PC-9 (cell line): ENCODE measurements at regions of chrX and their contacts with region 1.

Region 1: GRCh38 chrX:69153060-69153730 is 12.1 kb downstream of the PJA1 start:
- DNase-seq: peak; percentile 53 to 55
- H3K4me3 ChIP-seq: no peak overlapping the region
- H3K27ac ChIP-seq: peak overlapping the region; percentile 90
- H3K4me1 ChIP-seq: peaks cover 49% of the 10 kb centered on the region
- H3K27me3 ChIP-seq: no peaks in the 10 kb centered on the region
- CTCF ChIP-seq: no peak

Region 2: DNA sequence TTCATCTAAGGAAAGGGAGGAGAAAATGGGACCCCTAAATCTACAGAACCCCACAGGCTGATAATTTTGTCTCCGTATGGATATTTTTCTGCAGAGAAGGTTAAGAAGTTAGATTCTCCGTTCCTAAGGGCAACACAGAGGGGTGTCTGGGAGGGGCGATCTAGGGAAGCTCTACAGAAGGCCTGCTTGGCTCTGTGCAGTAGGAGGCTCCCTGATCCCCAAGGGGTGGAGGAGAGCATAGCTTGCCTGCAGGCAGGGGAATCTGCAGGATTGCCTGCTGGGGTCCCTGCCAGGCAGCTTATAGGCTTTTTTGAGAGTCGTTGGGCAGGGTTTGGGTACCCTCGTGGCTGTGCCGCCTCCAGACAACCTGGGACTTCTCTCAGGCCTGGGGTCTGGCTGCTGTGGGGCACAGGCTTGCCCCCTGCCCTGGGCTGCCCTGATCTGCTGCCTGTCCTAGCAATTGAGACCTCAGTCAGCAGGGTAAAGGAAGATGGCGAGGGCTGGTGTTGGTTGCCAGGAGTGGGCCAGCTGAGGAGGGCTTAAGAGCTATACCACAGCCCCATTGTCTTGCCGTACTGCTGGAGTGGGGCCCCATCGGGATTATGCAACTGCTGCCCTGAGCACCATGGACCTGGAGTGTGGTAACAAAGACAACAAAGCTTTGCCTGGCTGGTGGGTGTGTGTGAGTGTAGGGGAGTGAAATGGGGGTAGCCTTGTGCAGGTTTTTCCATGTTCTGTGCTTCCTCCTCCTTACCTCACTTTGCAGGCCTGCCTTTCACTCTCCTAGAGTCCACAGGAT is 250.3 kb before region 1 on chrX:
- CTCF ChIA-PET with region 1: no interaction called
- POLR2A ChIA-PET with region 1: interaction called, 17 read pairs
- intact Hi-C with region 1: no loop called
- DNase-seq: no peak
- H3K4me3 ChIP-seq: no peak overlapping the region
- H3K27ac ChIP-seq: no peak overlapping the region
- H3K4me1 ChIP-seq: no peaks in the 10 kb centered on the region
- H3K27me3 ChIP-seq: no peaks in the 10 kb centered on the region
- CTCF ChIP-seq: no peak

Region 3: GRCh38 chrX:68983004-68983857 is 170.0 kb before region 1 on chrX:
- CTCF ChIA-PET with region 1: no interaction called
- POLR2A ChIA-PET with region 1: no interaction called
- intact Hi-C with region 1: no loop called
- DNase-seq: no peak
- H3K4me3 ChIP-seq: no peak overlapping the region
- H3K27ac ChIP-seq: no peak overlapping the region
- H3K4me1 ChIP-seq: 0 out of 2 replicates have a peak, but pooled peaks cover 6% of the 10 kb centered on the region
- H3K27me3 ChIP-seq: no peaks in the 10 kb centered on the region
- CTCF ChIP-seq: no peak

Region 4: DNA sequence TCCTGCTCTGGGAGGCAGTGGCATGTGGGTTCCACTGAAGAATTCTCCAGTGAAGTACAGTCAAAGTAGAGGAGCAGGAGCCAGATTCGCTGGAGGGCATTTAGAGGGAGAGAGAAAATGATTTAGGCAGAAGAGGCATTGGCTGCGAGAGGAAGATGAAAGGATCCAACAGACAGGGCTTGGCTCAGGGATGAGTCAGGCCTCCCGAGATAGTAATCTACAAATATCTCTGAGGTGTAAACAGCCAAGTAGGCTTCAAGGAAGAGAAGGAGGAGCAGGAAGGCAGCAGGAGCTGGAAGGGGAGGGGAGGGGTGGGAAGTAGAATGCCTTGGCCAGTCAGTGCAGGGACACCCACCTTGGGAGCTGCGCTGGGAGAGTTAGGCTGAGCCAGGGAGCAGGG is 43.5 kb before region 1 on chrX:
- CTCF ChIA-PET with region 1: no interaction called
- POLR2A ChIA-PET with region 1: interaction called, 4 read pairs
- intact Hi-C with region 1: loop called (anchors 2 kb)
- DNase-seq: peak; percentile 73 to 93
- H3K4me3 ChIP-seq: no peak overlapping the region
- H3K27ac ChIP-seq: no peak overlapping the region
- H3K4me1 ChIP-seq: peaks cover 36% of the 10 kb centered on the region
- H3K27me3 ChIP-seq: no peaks in the 10 kb centered on the region
- CTCF ChIP-seq: no peak

Region 5: DNA sequence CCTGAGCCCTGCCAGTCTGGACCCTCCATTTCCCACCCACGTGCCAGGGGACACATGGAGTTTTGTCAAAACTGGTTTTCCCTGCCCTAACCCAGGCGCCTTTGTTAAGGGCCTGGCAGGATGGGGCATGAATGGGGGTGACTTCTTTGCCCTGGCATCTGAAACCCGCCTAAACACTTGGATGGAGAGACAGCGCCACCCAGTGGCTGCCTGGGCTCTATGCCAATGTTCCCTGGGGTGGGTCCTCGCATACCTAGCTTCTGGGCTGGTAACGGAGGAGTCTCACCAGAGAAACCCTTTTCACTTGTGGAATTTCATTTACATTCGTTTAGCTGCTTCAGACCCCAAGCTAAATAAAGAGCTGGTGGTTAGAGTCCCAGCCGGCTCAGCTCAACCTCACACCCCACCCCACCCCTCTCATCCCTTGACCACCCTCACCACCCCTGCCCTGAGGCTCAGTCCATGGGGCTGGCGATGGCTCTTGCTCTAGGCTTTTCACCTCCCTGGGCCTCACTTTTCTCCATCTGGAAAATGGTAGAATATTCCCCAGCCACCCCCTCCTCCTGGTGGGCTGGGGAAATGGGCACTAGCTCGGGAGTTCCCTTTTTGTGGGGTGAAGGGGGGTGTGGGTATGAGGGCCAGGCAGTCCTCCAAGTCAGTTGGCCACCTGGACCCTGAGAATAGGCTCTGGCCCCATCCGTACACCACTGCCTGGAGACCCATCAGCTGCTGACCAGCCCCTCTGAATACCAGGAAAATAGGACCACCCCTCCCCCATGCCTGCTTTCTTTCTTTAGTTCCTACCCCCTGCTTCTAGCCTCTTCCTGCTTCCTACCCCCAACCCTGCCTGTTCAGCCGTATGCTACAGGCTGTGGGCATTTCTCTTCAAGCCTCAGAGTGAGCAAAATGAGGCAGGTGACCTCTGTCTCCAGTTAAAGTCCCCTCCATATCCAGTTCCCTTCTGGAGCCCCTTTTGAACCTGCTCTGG is 69.2 kb after region 1 on chrX:
- CTCF ChIA-PET with region 1: no interaction called
- POLR2A ChIA-PET with region 1: no interaction called
- intact Hi-C with region 1: no loop called
- DNase-seq: peak; percentile 43 to 77
- H3K4me3 ChIP-seq: no peak overlapping the region
- H3K27ac ChIP-seq: no peak overlapping the region
- H3K4me1 ChIP-seq: no peaks in the 10 kb centered on the region
- H3K27me3 ChIP-seq: no peaks in the 10 kb centered on the region
- CTCF ChIP-seq: peak; percentile 85

Region 6: DNA sequence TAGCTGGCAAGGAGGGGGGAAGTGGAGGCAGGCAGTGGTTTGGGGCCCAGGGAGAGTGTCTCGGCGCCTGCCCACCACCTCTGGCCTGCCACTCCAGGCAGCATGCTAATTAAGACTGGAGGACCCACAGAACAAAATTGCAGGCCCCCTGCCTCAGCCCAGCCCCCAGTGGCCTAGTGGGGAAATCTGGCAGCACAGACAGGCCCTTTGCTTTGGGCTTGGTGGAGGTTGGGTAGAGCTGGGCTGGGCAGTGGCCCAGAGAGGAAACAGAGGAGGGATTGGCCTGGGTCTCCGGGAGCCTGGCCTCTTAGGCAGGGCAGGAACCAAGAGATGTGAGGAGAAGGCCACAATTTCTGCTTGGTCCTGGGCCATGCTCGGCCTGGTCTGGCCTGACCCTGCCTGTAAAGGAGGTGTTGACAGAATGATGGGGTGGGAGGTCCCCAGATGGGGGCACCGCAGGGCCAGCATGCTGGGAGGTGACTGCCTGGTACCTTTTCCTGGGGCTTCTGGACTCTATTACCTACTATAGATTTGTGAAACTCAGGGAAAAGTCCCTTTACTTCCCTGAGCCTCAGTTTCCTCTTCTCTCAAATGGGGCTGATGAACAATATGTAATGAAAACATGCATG is 104.4 kb after region 1 on chrX:
- CTCF ChIA-PET with region 1: no interaction called
- POLR2A ChIA-PET with region 1: no interaction called
- intact Hi-C with region 1: no loop called
- DNase-seq: no peak
- H3K4me3 ChIP-seq: no peak overlapping the region
- H3K27ac ChIP-seq: no peak overlapping the region
- H3K4me1 ChIP-seq: no peaks in the 10 kb centered on the region
- H3K27me3 ChIP-seq: peaks cover 5% of the 10 kb centered on the region; the same call in 1 of the 2 replicates
- CTCF ChIP-seq: no peak

Region 7: GRCh38 chrX:69314436-69315348 is 161.5 kb after region 1 on chrX:
- CTCF ChIA-PET with region 1: no interaction called
- POLR2A ChIA-PET with region 1: no interaction called
- intact Hi-C with region 1: no loop called
- DNase-seq: no peak
- H3K4me3 ChIP-seq: no peak overlapping the region
- H3K27ac ChIP-seq: no peak overlapping the region
- H3K4me1 ChIP-seq: no peaks in the 10 kb centered on the region
- H3K27me3 ChIP-seq: no peaks in the 10 kb centered on the region
- CTCF ChIP-seq: no peak